Mammary epithelial cell (primary cell): ENCODE measurements at regions of chr1 and their contacts with region 1.

Region 1: DNA sequence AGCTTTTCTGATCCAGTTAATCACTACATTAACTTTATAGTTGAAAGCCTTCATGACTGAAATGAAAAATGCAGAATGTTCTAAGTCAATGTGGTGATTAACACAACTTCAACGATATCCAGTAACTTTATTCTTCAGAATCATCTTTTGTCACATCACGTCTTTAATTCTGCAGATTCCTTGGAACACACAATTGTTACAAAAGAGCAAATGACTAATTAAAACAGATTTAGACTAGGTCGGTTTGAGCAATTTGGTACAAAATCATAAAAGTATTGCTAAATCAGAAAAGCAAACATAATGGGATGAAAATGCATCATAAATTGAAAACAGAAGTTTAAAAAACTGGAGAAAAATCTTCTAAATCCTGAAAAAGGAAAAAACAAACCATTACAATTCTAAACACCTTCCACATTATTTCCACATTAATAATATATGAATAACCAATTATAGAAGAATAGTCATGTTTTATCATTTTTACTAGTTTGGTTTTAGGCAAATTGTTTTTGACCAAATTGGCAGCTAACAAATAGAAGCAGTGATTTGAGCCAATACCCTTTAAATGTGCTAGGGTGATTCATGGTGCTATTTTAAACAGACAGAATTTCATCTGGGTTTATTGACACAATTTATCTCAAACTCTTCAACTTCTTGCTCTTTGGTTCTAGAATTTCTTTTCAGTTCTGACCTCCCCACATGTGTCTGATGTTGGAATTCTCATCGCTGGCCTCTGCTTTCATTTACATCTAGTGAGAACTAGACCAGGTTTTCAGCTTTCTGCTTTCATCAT is 468.1 kb upstream of the PTBP2 start:
- DNase-seq: no peak
- H3K4me3 ChIP-seq: no peak overlapping the region
- H3K27ac ChIP-seq: no peak overlapping the region
- H3K4me1 ChIP-seq: no peaks in the 10 kb centered on the region
- H3K27me3 ChIP-seq: no peaks in the 10 kb centered on the region
- CTCF ChIP-seq: no peak

Region 2: DNA sequence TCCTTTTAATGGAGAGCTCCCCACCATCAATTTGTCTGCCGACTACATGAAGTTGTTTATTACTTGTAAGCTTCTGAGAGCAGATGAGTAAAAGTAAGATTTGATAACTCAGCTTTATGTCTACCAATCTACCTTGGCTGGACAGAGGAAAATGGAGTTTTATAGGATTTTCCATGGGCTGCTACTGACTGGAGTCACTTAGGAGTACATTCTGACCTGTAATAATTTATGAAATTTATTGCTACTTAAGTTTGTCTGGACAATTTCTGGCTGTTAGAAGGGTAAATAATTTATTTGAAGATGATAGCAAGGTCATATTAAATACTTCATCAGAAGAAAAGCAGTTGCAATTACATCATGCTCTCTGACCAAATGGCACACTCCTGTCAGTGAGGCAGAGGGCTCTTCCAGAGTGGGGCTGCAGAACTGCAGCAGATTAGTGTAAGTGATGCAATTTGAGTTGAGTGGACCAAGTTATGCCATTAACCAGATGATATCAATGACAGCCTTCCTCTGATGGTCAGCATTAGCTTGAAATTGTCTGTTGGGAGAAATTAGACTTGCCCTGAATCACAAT is 268.6 kb before region 1 on chr1:
- CTCF ChIA-PET with region 1: no interaction called
- dilution Hi-C with region 1: no loop called
- in situ Hi-C with region 1: no loop called
- intact Hi-C with region 1: no loop called
- DNase-seq: no peak
- H3K4me3 ChIP-seq: no peak overlapping the region
- H3K27ac ChIP-seq: no peak overlapping the region
- H3K4me1 ChIP-seq: no peaks in the 10 kb centered on the region
- H3K27me3 ChIP-seq: no peaks in the 10 kb centered on the region
- CTCF ChIP-seq: no peak

Region 3: GRCh38 chr1:96009831-96010434 is 243.5 kb before region 1 on chr1:
- CTCF ChIA-PET with region 1: no interaction called
- dilution Hi-C with region 1: no loop called
- in situ Hi-C with region 1: no loop called
- intact Hi-C with region 1: no loop called
- DNase-seq: no peak
- H3K4me3 ChIP-seq: no peak overlapping the region
- H3K27ac ChIP-seq: no peak overlapping the region
- H3K4me1 ChIP-seq: no peaks in the 10 kb centered on the region
- H3K27me3 ChIP-seq: no peaks in the 10 kb centered on the region
- CTCF ChIP-seq: no peak

Region 4: GRCh38 chr1:96515430-96515829 is 262.0 kb after region 1 on chr1:
- CTCF ChIA-PET with region 1: no interaction called
- dilution Hi-C with region 1: loop called (anchors 10 kb)
- in situ Hi-C with region 1: no loop called
- intact Hi-C with region 1: no loop called
- DNase-seq: no peak
- H3K4me3 ChIP-seq: no peak overlapping the region
- H3K27ac ChIP-seq: no peak overlapping the region
- H3K4me1 ChIP-seq: no peaks in the 10 kb centered on the region
- H3K27me3 ChIP-seq: no peaks in the 10 kb centered on the region
- CTCF ChIP-seq: no peak